ENCODE measurements at regions of chr14 and their contacts with region 1.

Region 1: GRCh38 chr14:74762917-74763802 is at the start of gene YLPM1:
- H3K4me3 Mint-ChIP-seq: peak within 1 kb of the TSS; percentile 99
- H3K27ac Mint-ChIP-seq: peak within 1 kb of the TSS; percentile 90
- H3K4me1 Mint-ChIP-seq: peaks cover 40% of the 10 kb centered on the region
- H3K27me3 Mint-ChIP-seq: peaks cover 3% of the 10 kb centered on the region

Region 2: GRCh38 chr14:74084277-74085046 is 678.7 kb before region 1 on chr14 and contains the starts of genes ALDH6A1 and LIN52:
- intact Hi-C with region 1: loop called (anchors 10 kb)
- H3K4me3 Mint-ChIP-seq: peak within 1 kb of the TSS; percentile 87
- H3K27ac Mint-ChIP-seq: peak within 1 kb of the TSS; percentile 89
- H3K4me1 Mint-ChIP-seq: peaks cover 34% of the 10 kb centered on the region
- H3K27me3 Mint-ChIP-seq: no peaks in the 10 kb centered on the region